ENCODE measurements at regions of chr5 and their contacts with region 1.

Region 1: DNA sequence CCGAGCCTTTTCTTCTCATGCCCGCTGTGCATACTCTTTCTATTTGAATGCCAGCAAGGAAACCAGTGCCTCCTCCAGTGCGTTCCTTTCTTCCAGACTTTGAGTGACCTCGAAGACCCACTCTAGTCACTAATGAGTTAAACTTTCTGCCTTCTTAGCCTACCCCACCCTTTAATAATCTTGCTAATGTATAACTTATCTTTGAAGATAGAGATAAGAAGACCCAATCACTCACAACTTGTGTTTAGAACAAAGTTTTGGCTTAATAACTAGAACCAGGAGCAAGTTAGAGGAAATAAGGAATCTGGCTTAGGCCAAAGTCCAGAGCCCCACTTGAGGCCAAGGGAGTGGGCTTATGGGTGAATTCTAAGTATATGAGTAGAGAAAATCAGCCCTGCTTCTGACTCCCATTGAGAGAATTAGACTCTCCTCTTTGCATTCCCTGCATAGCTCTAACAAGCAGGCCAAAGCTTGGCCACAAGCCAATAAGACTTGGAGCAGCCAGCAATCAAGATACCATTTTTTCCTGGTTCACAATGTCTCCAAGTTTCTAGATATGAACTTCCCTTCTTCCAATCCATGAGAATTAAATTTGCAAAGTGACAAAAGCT is 181.5 kb upstream of the PIK3R1 start:
- DNase-seq: no peak
- H3K4me3 Mint-ChIP-seq: no peak overlapping the region
- H3K27ac Mint-ChIP-seq: no peak overlapping the region
- H3K4me1 Mint-ChIP-seq: peaks cover 18% of the 10 kb centered on the region
- H3K27me3 Mint-ChIP-seq: no peaks in the 10 kb centered on the region
- CTCF ChIP-seq: no peak

Region 2: DNA sequence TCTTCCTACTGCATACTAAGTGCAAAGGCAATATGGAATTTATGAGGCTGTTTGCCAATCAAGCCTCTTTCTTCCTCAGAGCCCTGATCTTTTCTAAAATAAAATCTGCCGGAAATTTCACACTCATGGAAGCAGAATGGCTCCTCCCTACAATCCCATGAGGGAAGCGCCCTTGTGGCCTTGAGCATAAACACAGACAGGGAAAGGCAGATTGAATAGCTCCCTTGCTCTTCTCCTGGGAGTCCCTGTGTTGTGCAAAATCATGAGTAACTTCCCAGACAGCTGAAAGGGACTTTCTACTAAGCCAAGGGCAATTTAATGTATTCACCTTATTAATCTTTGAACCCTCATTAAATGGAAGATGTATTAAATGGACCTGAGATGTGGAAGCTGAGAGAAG is 44.6 kb before region 1 on chr5:
- CTCF ChIA-PET with region 1: no interaction called
- POLR2A ChIA-PET with region 1: no interaction called
- intact Hi-C with region 1: no loop called
- DNase-seq: peak; percentile 41
- H3K4me3 Mint-ChIP-seq: no peak overlapping the region
- H3K27ac Mint-ChIP-seq: no peak overlapping the region
- H3K4me1 Mint-ChIP-seq: peaks cover 17% of the 10 kb centered on the region
- H3K27me3 Mint-ChIP-seq: no peaks in the 10 kb centered on the region
- CTCF ChIP-seq: no peak

Region 3: DNA sequence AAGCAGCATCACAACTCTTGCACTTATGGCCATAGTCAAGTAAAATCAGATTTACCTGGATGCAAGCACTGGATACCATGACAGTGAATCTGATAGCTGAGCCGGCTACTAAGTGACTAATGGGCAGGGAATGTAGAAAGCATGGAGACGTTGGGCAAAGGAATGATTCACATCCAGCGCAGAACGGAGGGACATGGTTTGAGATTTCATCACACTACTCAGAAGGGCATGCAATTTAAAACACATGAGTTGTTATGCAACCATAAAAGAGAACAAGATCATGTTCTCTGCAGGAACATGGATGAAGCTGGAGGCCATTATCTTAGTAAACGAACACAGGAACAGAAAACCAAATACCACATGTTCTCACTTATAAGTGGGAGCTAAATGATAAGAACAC is 12.4 kb after region 1 on chr5:
- CTCF ChIA-PET with region 1: no interaction called
- POLR2A ChIA-PET with region 1: interaction called, 11 read pairs
- intact Hi-C with region 1: no loop called
- DNase-seq: peak; percentile 98
- H3K4me3 Mint-ChIP-seq: peak overlapping the region; percentile 11
- H3K27ac Mint-ChIP-seq: peak overlapping the region; percentile 92
- H3K4me1 Mint-ChIP-seq: peaks cover 23% of the 10 kb centered on the region
- H3K27me3 Mint-ChIP-seq: no peaks in the 10 kb centered on the region
- CTCF ChIP-seq: no peak

Region 4: GRCh38 chr5:68343421-68343826 is 309.4 kb after region 1 on chr5:
- CTCF ChIA-PET with region 1: no interaction called
- POLR2A ChIA-PET with region 1: no interaction called
- intact Hi-C with region 1: no loop called
- DNase-seq: peak; percentile 97
- H3K4me3 Mint-ChIP-seq: no peak overlapping the region
- H3K27ac Mint-ChIP-seq: peak overlapping the region; percentile 94
- H3K4me1 Mint-ChIP-seq: peaks cover 38% of the 10 kb centered on the region
- H3K27me3 Mint-ChIP-seq: no peaks in the 10 kb centered on the region
- CTCF ChIP-seq: no peak

Measured in MCF 10A (cell line).